ENCODE measurements at regions of chr12 and their contacts with region 1.

Region 1: DNA sequence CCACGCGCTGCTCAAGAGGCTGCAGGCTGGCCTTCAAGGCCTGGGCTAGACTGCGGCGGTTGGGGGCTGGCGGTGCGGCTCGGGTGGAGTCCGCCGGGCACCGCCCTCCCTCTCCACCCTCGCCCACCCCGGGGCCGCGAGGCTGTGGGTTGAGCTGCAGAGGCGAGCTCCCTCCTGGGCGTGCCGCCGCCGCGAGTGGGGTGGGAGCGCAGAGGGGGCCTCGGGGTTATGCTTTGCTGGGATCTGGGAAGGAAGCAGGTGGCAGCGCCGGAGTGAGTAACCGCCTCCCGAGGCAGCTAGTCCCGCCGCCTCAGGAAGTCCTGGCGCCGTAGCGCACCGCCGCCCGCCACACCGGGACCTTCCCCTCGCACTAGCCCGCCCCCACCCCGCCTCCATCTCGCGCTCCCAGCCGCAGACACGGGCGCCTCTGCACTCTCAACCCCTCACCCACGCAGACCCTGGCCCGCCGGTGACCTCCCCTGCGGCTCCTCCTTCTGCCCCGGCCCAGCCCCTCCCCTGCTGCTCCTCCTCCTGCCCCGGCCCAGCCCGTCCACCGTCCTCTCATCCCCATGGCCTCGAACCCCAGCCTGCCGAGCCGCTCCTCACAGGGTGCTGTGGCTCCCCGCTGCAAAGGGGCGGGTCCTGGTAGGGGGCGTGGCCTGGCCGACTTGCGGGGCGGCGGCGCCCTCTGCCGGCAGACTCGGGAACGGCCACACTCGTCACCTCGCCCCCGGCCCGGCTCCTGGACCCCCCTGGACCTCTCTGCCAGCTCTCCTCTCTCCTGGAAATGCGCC is 16.6 kb downstream of the TAMALIN start:
- DNase-seq: peak in 1 of 2 donors; percentile 93
- H3K4me3 ChIP-seq: peak overlapping the region; percentile 67 to 69
- H3K27ac ChIP-seq: peak overlapping the region in 1 of 2 donors; percentile 44
- H3K4me1 ChIP-seq: peaks cover 7 to 28% of the 10 kb centered on the region in 2 donors
- H3K27me3 ChIP-seq: no peaks in the 10 kb centered on the region
- CTCF ChIP-seq: peak; percentile 97 to 98 (median 98)

Region 2: GRCh38 chr12:51951199-51951842 is 72.1 kb before region 1 on chr12 and contains the start of gene ACVR1B:
- intact Hi-C with region 1: loop called (anchors 5 kb)
- DNase-seq: peak; percentile 62 to 96
- H3K4me3 ChIP-seq: peak within 1 kb of the TSS; percentile 94 to 97
- H3K27ac ChIP-seq: peak within 1 kb of the TSS; percentile 80 to 85
- H3K4me1 ChIP-seq: peaks cover 9 to 17% of the 10 kb centered on the region in 2 donors
- H3K27me3 ChIP-seq: no peaks in the 10 kb centered on the region
- CTCF ChIP-seq: no peak
- total RNA-seq, gene ACVR1B: 18.7 TPM

Region 3: GRCh38 chr12:52004042-52004648 is 19.2 kb before region 1 on chr12:
- intact Hi-C with region 1: loop called (anchors 1 kb)
- DNase-seq: peak in 1 of 2 donors; percentile 78
- H3K4me3 ChIP-seq: no peak overlapping the region
- H3K27ac ChIP-seq: no peak overlapping the region
- H3K4me1 ChIP-seq: peaks cover 0 to 16% of the 10 kb centered on the region in 2 donors
- H3K27me3 ChIP-seq: no peaks in the 10 kb centered on the region
- CTCF ChIP-seq: peak; percentile 52 to 76 (median 72)

Region 4: DNA sequence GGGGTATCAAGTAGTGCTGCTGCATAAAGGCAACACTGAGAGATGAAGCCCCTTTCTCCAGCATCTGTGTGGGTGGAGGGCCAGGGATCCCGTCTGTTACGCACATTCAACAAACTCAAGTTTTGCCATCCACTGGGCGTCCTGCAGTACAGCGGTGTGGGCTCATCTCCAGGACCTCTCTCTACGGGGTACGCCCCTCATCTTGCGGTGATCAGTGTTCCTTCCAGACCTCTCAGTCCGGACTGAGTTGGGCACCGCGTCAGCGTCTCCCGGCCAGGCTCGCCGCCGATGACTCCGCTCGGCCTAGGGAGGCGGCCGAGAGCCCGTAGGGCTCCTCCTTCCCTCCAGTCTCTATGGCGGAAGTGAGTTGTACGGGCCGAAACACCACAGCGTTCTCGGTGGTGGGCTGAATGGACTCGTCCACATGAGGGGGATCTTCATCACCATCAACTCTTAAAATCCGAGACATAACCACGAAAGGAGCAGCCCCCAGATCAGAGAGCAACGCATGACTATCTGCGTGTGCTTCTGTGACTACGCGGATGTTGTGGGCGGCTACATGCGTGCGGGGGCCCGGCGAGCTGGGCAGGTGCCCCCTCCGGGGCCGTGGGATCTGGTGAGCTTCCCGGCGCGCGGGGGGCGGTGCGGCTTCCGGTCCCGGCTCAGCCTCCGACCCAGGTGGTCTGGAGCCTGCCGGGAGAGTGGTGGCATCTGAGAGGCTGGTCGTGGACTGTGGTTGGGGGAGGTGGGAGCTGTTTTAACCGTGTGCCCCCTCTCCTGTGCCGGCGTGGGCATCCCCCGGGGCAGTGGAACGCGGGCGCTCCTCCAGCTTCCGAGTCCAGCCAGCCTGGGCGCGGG is 46.2 kb after region 1 on chr12 and contains the start of gene ATG101:
- intact Hi-C with region 1: loop called (anchors 1 kb)
- DNase-seq: peak; percentile 68 to 96
- H3K4me3 ChIP-seq: peak within 1 kb of the TSS; percentile 70 to 84
- H3K27ac ChIP-seq: peak within 1 kb of the TSS; percentile 85 to 89
- H3K4me1 ChIP-seq: peaks cover 10 to 19% of the 10 kb centered on the region in 2 donors
- H3K27me3 ChIP-seq: no peaks in the 10 kb centered on the region
- CTCF ChIP-seq: peak; percentile 37 to 87 (median 74)
- total RNA-seq, gene ATG101: 39.8 TPM

Region 5: DNA sequence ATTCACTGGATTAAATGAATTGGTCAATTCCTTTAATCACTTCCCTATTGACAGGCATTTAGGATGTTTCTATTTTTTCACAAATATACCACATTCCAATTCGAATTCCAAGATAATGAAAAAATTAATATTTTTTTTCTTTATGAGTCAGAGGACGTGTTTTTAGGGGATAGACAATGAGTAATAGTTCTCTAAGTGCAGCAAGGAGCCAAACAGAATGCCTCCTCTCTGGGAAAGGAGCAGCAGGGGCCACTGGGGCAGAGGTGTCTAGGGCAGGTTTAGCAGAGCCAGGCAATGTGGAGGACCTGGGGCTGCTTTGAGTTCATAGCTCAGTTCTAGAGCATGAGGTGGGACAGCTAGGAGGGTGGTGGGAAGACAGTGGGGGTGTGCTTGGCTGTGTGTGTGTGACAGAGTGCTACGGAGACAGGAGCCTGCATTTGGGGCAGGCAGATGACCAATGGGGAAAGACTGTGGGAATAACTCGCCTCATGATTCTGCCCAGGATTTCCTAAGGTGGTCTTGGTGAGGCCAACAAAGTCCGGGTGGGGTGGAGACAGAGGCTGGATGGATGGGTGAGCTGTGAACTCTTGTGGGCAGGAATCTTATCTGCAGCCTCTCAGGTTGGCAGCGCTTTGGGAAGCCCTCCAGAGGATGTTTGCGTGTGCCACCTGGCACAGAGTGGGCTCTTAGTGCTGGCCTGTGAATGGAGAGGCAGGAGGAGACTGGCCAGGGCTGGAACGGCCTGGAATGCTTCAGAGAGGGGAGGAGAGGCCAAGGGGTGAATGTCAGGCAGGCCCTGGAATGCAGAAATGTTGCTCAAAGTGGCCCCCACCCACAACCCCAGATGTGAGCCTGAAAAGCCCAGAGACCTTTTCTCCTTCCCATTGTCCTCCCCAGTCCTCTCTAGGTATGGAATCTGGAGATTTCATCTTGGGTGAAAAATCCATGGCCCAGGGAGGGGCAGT is 207.2 kb after region 1 on chr12:
- intact Hi-C with region 1: no loop called
- DNase-seq: peak in 1 of 2 donors; percentile 84
- H3K4me3 ChIP-seq: no peak overlapping the region
- H3K27ac ChIP-seq: peak overlapping the region; percentile 74 to 83
- H3K4me1 ChIP-seq: peaks cover 15 to 44% of the 10 kb centered on the region in 2 donors
- H3K27me3 ChIP-seq: peaks cover 4% of the 10 kb centered on the region
- CTCF ChIP-seq: no peak

Region 6: GRCh38 chr12:53005986-53006809 is 982.8 kb after region 1 on chr12 and contains the start of gene EIF4B:
- intact Hi-C with region 1: loop called (anchors 10 kb)
- DNase-seq: peak; percentile 98 to 100
- H3K4me3 ChIP-seq: peak within 1 kb of the TSS; percentile 84 to 89
- H3K27ac ChIP-seq: peak within 1 kb of the TSS; percentile 79 to 87
- H3K4me1 ChIP-seq: peaks cover 14 to 28% of the 10 kb centered on the region in 2 donors
- H3K27me3 ChIP-seq: no peaks in the 10 kb centered on the region
- CTCF ChIP-seq: no peak
- total RNA-seq, gene EIF4B: 181 TPM